Activated T-helper 1 cell treated with anti-CD3 and anti-CD28 coated beads, Interleukin-12 subunit alpha, Interleukin-12 subunit beta, Interleukin-2, Interleukin-4 antibody, amounts not matched to agents 30 ng/mL and 10 ng/mL and 1 ng/mL, durations not matched to agents 14 hours and 24 hours and 36 hours (primary cell): ENCODE measurements at regions of chr12 and their contacts with region 1.

Region 1: GRCh38 chr12:112937741-112938719 is at the start of gene OAS3:
- DNase-seq: peak; percentile 82
- H3K4me3 Mint-ChIP-seq: peak within 1 kb of the TSS; percentile 91
- H3K27ac Mint-ChIP-seq: peak within 1 kb of the TSS; percentile 95
- H3K4me1 Mint-ChIP-seq: peaks cover 60% of the 10 kb centered on the region
- H3K27me3 Mint-ChIP-seq: no peaks in the 10 kb centered on the region
- total RNA-seq, gene OAS3: 50.1 and 54.2 TPM in 2 replicates

Region 2: DNA sequence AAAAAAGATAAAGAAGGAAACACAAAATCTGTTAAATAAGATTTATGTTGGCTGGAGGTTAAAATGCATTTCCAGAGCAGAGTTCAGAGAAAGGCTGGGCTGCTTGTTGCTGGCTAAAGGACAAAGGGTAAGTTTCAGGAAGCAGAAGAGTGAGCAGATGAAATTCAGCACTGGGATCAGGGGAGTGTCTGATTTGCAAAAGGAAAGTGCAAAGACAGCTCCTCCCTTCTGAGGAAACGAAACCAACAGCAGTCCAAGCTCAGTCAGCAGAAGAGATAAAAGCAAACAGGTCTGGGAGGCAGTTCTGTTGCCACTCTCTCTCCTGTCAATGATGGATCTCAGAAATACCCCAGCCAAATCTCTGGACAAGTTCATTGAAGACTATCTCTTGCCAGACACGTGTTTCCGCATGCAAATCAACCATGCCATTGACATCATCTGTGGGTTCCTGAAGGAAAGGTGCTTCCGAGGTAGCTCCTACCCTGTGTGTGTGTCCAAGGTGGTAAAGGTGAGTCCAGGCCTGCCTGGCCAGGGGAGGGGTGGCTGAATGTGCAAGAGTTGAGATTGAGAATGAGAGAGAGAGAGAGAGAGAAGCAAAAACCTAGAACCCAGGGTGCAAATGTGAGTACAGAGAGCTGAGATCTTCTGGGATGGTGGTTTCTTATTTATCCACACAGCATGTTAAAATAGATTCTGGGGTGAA is 31.2 kb before region 1 on chr12 and contains the start of gene OAS1:
- intact Hi-C with region 1: loop called (anchors 1 kb)
- DNase-seq: peak; percentile 49
- H3K4me3 Mint-ChIP-seq: peak within 1 kb of the TSS; percentile 95
- H3K27ac Mint-ChIP-seq: peak within 1 kb of the TSS; percentile 95
- H3K4me1 Mint-ChIP-seq: peaks cover 93% of the 10 kb centered on the region
- H3K27me3 Mint-ChIP-seq: no peaks in the 10 kb centered on the region
- total RNA-seq, gene OAS1: 24.2 and 29.2 TPM in 2 replicates